ENCODE measurements at regions of chr12 and their contacts with region 1.

Region 1: DNA sequence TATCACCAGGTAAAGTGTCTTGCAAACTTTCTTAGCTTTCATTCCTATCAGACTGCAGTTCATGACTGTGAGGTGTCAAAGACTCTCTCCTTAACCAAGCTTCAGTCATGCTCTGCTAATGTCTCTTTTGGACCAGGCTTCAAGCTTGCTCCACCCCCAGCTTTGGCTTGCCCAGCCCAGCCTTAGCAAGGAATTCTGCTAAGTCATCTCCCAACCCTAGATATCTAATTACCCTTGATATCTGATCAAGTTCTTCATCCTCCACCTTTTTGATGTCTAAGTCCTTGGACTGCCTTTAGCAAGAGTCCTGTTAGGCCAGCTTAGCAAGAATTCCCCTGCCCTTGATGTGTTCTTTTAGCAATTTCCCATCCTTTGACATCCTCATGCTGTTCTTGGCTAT is 108.9 kb upstream of the FGD4 start:
- DNase-seq: peak; percentile 72 to 77
- H3K4me3 ChIP-seq: no peak overlapping the region
- H3K4me3 Mint-ChIP-seq: peak overlapping the region; percentile 14
- H3K27ac Mint-ChIP-seq: peak overlapping the region; percentile 79
- H3K4me1 ChIP-seq: peaks cover 22% of the 10 kb centered on the region
- H3K4me1 Mint-ChIP-seq: peaks cover 27% of the 10 kb centered on the region
- H3K27me3 ChIP-seq: no peaks in the 10 kb centered on the region
- H3K27me3 Mint-ChIP-seq: no peaks in the 10 kb centered on the region
- CTCF ChIP-seq: no peak

Region 2: DNA sequence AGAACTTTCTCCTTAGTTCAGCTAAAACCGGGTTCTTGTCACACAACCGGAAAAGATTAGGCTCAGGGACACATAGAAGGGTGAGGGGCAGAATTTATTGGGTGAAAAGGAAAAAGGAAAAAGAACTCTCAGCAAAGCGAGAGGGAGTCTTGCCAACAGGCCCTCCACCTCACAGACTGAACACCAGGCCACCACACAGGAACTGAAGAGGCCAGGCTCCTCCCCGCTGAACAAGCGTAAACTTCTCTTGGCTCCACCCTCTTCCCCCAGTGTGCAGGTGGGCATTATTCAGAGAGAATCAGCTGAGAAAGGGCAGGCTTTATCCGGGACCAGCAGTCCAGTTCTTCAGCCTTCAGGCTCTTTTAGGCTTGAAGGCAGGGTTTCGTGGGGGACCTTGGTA is 16.7 kb before region 1 on chr12:
- CTCF ChIA-PET with region 1: no interaction called
- POLR2A ChIA-PET with region 1: interaction called, 3 read pairs
- intact Hi-C with region 1: loop called (anchors 1 kb)
- DNase-seq: peak in 1 of 2 experiments; percentile 35
- H3K4me3 ChIP-seq: no peak overlapping the region
- H3K4me3 Mint-ChIP-seq: peak overlapping the region; percentile 22
- H3K27ac Mint-ChIP-seq: peak overlapping the region; percentile 61
- H3K4me1 ChIP-seq: peaks cover 47% of the 10 kb centered on the region
- H3K4me1 Mint-ChIP-seq: peaks cover 44% of the 10 kb centered on the region
- H3K27me3 ChIP-seq: no peaks in the 10 kb centered on the region
- H3K27me3 Mint-ChIP-seq: no peaks in the 10 kb centered on the region
- CTCF ChIP-seq: no peak